ENCODE measurements at regions of chr14 and their contacts with region 1.

Region 1: DNA sequence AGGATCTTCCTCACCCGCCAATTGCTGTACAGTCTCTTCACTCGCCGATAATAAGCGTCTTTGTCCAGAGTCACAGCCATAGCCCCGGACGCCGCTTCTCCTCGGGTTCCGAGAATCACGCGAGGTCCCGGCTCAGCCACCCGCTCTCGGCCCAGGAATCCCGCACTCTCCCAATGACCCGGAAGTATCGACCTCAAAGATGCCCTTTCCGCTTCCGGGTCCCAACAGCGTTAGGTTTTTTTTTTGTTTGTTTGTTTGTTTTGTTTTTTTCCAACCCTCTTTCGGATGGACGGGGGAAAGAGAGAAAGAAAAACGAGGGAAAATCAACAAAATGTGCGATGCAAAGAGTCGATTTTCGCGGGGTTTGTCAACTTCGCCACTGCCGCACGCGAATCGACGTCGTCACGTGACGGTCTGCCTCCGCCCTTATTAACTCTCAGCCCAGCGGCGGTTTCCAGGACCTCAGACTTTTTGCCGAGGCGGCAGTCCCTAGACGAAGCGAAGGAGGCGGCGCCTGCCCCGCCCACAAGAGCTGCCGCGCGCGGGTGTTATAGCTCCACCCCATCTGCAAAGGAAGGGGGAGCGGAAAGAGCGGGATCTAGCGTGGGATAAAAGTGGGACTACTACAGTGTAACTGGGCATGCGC is at the start of gene SUPT16H:
- DNase-seq: peak; percentile 97
- ATAC-seq: peak; percentile 90
- H3K4me3 Mint-ChIP-seq: peak within 1 kb of the TSS; percentile 98
- H3K27ac Mint-ChIP-seq: peak within 1 kb of the TSS; percentile 98
- H3K4me1 Mint-ChIP-seq: peaks cover 36% of the 10 kb centered on the region
- H3K27me3 Mint-ChIP-seq: no peaks in the 10 kb centered on the region
- total RNA-seq, gene SUPT16H: 177 to 179 TPM

Region 2: DNA sequence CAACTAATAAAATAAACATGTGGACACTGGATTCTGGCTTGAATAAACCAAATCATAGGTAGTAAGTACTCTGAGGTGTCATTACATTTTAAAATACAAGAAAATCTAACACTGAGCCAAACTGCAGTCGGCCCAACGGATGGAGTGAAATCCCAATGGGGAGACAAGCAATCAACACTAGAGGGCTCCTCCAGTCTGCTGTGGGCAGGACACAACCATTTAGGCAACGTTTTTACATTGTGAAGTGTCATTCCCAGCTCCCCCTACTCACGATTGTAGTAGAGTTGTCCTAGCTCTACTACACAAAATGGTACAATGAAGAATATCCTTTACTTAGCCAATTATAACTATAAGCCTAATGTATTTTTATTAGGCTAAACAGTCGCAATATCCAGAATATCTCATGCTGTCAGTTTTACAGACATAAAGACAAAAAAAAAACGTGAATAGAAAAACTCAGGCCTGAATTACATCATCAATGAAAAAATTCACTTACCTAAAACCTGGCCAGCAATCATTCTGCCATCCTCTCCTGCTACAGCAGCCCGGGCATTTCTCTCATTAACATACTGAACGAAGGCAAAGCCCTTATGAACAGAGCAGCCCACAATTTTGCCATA is 150.4 kb before region 1 on chr14:
- CTCF ChIA-PET with region 1: no interaction called
- POLR2A ChIA-PET with region 1: no interaction called
- intact Hi-C with region 1: loop called in 1 of 2 experiments (anchors 10 kb)
- DNase-seq: peak; percentile 32
- ATAC-seq: peak; percentile 28
- H3K4me3 Mint-ChIP-seq: peak overlapping the region; percentile 32
- H3K27ac Mint-ChIP-seq: peak overlapping the region; percentile 91
- H3K4me1 Mint-ChIP-seq: peaks cover 87% of the 10 kb centered on the region
- H3K27me3 Mint-ChIP-seq: no peaks in the 10 kb centered on the region

Region 3: GRCh38 chr14:21269252-21270046 is 114.5 kb before region 1 on chr14 and contains the start of gene HNRNPC:
- CTCF ChIA-PET with region 1: interaction called, 6 read pairs
- POLR2A ChIA-PET with region 1: interaction called, 5 read pairs
- intact Hi-C with region 1: loop called (anchors 1 kb)
- DNase-seq: peak; percentile 100
- ATAC-seq: peak; percentile 89
- H3K4me3 Mint-ChIP-seq: peak within 1 kb of the TSS; percentile 93
- H3K27ac Mint-ChIP-seq: peak within 1 kb of the TSS; percentile 100
- H3K4me1 Mint-ChIP-seq: peaks cover 25% of the 10 kb centered on the region
- H3K27me3 Mint-ChIP-seq: no peaks in the 10 kb centered on the region
- total RNA-seq, gene HNRNPC: 1,155 to 1,665 TPM

Region 4: GRCh38 chr14:21346549-21347135 is 37.3 kb before region 1 on chr14:
- CTCF ChIA-PET with region 1: no interaction called
- POLR2A ChIA-PET with region 1: no interaction called
- intact Hi-C with region 1: no loop called
- DNase-seq: no peak
- ATAC-seq: no peak
- H3K4me3 Mint-ChIP-seq: no peak overlapping the region
- H3K27ac Mint-ChIP-seq: no peak overlapping the region
- H3K4me1 Mint-ChIP-seq: peaks cover 3% of the 10 kb centered on the region
- H3K27me3 Mint-ChIP-seq: no peaks in the 10 kb centered on the region

Region 5: GRCh38 chr14:21367582-21368144 is 16.3 kb before region 1 on chr14:
- CTCF ChIA-PET with region 1: interaction called, 4 read pairs
- POLR2A ChIA-PET with region 1: no interaction called
- intact Hi-C with region 1: loop called in 1 of 2 experiments (anchors 2 kb)
- DNase-seq: no peak
- ATAC-seq: no peak
- H3K4me3 Mint-ChIP-seq: no peak overlapping the region
- H3K27ac Mint-ChIP-seq: no peak overlapping the region
- H3K4me1 Mint-ChIP-seq: no peaks in the 10 kb centered on the region
- H3K27me3 Mint-ChIP-seq: no peaks in the 10 kb centered on the region

Region 6: DNA sequence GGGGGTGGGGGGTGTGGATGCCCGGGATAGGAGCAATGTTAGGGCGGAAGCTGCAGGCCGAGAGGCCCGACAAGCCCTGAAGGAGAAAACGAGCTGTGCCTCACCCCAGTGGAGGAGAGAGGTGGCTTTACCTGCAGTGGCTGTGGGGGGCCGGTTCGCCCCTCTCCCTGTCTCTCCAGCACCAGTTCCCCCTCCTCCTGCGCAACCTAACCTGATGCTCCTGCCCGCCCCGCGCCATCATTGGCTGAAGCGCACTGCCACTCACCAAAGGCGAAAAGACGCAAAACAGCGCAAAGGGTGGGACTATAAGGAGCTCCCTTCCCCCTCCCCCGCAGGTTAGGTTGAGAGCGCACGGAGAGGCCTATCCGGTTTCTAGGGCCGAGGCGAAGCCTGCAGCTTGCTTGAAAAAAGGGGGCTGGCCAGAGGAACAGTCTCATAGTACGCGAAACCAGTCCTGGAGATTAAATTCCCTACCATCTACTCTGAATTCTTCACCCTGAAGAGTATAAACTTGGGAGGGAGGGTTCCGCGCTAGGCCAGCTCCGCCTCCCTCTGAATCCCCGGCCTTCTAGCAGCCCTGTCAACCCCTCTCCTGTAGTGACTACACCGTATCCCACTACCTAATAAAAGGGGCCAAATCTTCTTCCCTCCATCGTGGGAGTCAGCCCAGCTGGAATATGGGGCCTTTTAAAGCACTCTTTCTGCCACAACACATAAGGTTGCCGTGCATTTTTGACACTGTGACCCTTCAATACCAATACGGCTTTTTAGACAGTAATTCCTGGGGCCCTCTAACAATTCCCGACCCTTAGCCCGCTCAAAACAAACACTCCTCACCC is 53.3 kb after region 1 on chr14:
- CTCF ChIA-PET with region 1: interaction called, 4 read pairs
- POLR2A ChIA-PET with region 1: interaction called, 10 read pairs
- intact Hi-C with region 1: loop called in 1 of 2 experiments (anchors 1 kb)
- DNase-seq: peak; percentile 99
- ATAC-seq: peak; percentile 99
- H3K4me3 Mint-ChIP-seq: peak overlapping the region; percentile 95
- H3K27ac Mint-ChIP-seq: peak overlapping the region; percentile 87
- H3K4me1 Mint-ChIP-seq: peaks cover 57% of the 10 kb centered on the region
- H3K27me3 Mint-ChIP-seq: no peaks in the 10 kb centered on the region

Region 7: GRCh38 chr14:21476925-21477681 is 93.1 kb after region 1 on chr14 and contains the starts of genes RAB2B and TOX4:
- CTCF ChIA-PET with region 1: no interaction called
- POLR2A ChIA-PET with region 1: interaction called, 5 read pairs
- intact Hi-C with region 1: loop called (anchors 1 kb)
- DNase-seq: peak; percentile 96
- ATAC-seq: peak; percentile 98
- H3K4me3 Mint-ChIP-seq: peak within 1 kb of the TSS; percentile 99
- H3K27ac Mint-ChIP-seq: peak within 1 kb of the TSS; percentile 100
- H3K4me1 Mint-ChIP-seq: peaks cover 22% of the 10 kb centered on the region
- H3K27me3 Mint-ChIP-seq: no peaks in the 10 kb centered on the region
- total RNA-seq, gene RAB2B: 21.2 to 22.0 TPM
- total RNA-seq, gene TOX4: 79.5 to 85.6 TPM

Region 8: GRCh38 chr14:21557084-21557901 is 173.3 kb after region 1 on chr14:
- CTCF ChIA-PET with region 1: no interaction called
- POLR2A ChIA-PET with region 1: no interaction called
- intact Hi-C with region 1: loop called in 1 of 2 experiments (anchors 2 kb)
- DNase-seq: peak; percentile 87
- ATAC-seq: peak; percentile 68
- H3K4me3 Mint-ChIP-seq: no peak overlapping the region
- H3K27ac Mint-ChIP-seq: no peak overlapping the region
- H3K4me1 Mint-ChIP-seq: peaks cover 4% of the 10 kb centered on the region
- H3K27me3 Mint-ChIP-seq: no peaks in the 10 kb centered on the region

Region 9: GRCh38 chr14:21668377-21668776 is 284.4 kb after region 1 on chr14:
- CTCF ChIA-PET with region 1: no interaction called
- POLR2A ChIA-PET with region 1: no interaction called
- intact Hi-C with region 1: no loop called
- DNase-seq: no peak
- ATAC-seq: no peak
- H3K4me3 Mint-ChIP-seq: no peak overlapping the region
- H3K27ac Mint-ChIP-seq: no peak overlapping the region
- H3K4me1 Mint-ChIP-seq: no peaks in the 10 kb centered on the region
- H3K27me3 Mint-ChIP-seq: peaks cover 30% of the 10 kb centered on the region

Measured in activated CD4-positive, alpha-beta T cell treated with anti-CD3 and anti-CD28 coated beads for 36 hours (primary cell).